Mammary epithelial cell (primary cell): ENCODE measurements at regions of chr12 and their contacts with region 1.

Region 1: DNA sequence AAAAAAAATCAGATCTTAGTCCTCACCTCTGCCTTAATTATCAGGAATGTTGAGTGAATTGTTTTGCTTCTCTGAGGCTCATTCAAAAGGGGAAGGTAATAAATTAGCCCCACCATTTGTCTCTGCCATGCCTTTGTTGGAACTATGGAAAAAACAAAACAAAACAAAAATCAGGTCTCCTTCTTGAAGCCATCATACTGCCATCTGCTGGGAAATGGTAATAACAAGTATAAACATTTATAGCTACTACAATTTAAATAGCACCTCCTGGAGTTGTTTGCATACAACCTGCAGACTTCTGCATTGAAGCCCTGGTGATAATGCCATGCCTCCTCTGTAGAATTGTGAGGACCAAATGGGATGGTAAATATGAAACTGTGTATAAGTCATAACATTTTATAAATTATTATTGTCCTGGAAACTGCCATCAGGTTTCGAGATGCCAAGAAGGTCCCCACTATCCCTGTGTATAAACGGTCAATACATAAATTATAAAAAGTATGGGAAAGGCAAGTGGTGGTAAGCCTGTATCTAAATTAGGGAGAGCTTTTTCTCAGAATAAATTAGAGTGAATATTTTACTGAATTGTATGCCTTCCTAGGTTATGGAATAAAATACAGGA is 87.2 kb upstream of the FGD4 start:
- DNase-seq: peak; percentile 45
- H3K4me3 ChIP-seq: no peak overlapping the region
- H3K27ac ChIP-seq: peak overlapping the region; percentile 8
- H3K4me1 ChIP-seq: no peaks in the 10 kb centered on the region
- H3K27me3 ChIP-seq: no peaks in the 10 kb centered on the region
- CTCF ChIP-seq: peak; percentile 29 to 55

Region 2: DNA sequence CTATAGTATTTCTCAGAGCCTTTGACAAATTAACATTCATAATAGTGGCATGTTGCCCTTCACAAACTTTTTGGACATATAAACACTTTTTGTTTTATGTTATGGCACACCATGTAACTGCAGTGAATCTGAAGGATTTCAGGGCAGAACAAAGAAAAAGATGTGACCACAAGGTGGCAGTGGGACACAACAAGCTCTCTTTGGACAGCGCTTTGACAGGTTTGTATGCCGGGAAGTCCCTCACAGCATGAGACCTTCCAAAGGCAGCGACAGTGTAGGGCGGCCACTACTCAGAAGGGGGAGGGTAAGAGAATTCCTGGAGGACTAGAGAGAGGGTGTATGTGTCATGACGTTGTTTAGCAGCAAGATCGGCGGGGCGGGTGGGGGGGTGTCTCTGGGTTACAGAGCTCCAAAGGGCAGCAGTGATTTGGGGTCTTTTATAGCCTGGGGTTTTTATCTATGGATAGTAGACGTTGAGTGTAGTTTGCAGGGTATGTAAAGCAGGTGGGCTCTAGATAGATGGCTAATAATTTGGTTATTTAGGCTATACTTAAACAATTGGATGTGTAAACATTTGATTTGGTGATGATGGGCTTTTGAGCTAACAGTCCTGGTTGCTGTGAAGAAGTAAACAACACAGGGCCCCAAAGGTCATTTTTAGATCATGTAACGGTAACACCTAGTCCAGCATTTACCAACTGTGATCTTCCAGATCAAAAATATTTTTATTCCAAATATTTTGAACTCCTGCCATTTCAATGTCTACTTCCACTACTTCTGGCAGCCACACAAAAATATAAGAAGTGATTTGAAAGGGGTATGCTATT is 629.8 kb before region 1 on chr12:
- CTCF ChIA-PET with region 1: no interaction called
- dilution Hi-C with region 1: no loop called
- in situ Hi-C with region 1: no loop called
- intact Hi-C with region 1: loop called (anchors 2 kb)
- DNase-seq: peak; percentile 73
- H3K4me3 ChIP-seq: no peak overlapping the region
- H3K27ac ChIP-seq: no peak overlapping the region
- H3K4me1 ChIP-seq: no peaks in the 10 kb centered on the region
- H3K27me3 ChIP-seq: no peaks in the 10 kb centered on the region
- CTCF ChIP-seq: peak; percentile 75 to 80

Region 3: DNA sequence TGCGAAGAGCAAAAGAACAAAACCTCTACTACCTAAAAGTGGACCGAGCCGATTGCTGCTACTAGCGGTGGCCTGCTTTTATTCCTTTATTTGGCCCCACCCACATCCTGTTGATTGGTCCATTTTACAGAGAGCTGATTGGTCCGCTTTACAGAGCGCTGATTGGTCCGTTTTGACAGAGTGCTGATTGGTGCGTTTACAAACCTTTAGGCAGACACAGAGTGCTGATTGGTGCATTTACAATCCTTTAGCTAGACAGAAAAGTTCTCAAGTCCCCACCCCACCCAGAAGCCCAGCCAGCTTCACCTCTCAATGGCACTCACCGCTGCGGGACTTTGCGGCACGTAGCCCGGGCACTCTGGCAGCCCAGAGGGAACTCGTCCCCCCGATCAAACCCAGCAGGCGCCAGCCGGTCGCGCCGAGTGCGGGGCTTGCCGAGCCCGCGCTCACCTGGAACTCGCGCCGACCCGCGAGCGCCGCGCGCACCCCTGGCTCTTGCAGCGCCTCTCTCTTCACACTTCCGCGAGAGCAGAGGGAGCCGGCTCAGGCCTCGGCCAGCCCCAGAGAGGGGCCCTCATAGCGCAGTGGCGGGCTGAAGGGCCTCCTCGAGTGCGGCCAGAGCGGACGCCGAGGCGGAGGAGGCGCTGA is 78.5 kb after region 1 on chr12:
- CTCF ChIA-PET with region 1: no interaction called
- dilution Hi-C with region 1: no loop called
- in situ Hi-C with region 1: no loop called
- intact Hi-C with region 1: no loop called
- DNase-seq: no peak
- H3K4me3 ChIP-seq: peak overlapping the region; percentile 26 to 52 (median 43)
- H3K27ac ChIP-seq: peak overlapping the region; percentile 0
- H3K4me1 ChIP-seq: no peaks in the 10 kb centered on the region
- H3K27me3 ChIP-seq: no peaks in the 10 kb centered on the region
- CTCF ChIP-seq: no peak